ENCODE measurements at regions of chr1 and their contacts with region 1.

Region 1: DNA sequence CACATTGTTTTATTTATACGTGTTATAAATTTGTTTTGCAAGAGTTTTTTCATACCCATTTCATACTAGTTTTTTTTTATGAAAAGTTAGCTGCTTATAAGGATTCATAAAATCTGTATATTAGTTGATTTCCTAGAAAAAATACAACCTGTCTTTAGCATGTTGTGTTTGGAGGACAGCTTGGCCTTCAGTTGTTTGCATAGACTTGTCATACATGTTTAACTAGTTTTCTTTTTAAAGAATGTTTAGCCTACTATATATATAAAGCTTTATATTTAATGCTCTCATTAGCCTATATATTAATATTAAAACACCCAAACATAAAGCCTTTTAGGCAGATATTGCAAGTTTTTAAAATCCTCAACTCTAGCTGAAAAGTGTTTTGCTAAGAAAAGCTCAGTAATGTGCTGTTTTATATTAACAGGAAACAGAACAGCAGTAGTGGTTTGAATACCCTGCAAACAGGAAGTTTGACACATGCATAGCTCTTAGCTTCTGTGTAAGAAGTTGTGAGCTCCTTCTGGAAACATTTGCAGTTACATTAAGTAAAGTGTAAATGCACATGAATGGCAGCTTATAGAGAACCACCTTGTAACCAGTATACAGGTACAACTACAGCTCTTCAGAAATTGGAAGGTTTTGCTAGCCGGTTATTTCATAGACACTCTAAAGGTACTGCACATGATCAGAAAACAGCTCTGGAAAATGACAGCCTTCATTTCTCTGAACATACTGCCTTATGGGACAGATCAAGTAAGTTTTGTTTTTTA is at the start of gene PRKACB:
- DNase-seq: peak; percentile 65
- ATAC-seq: peak; percentile 86
- H3K4me3 ChIP-seq: peak within 1 kb of the TSS; percentile 46 to 85 (median 63)
- H3K4me3 Mint-ChIP-seq: peak within 1 kb of the TSS; percentile 91
- H3K27ac ChIP-seq: peak within 1 kb of the TSS; percentile 74 to 92
- H3K27ac Mint-ChIP-seq: peak within 1 kb of the TSS; percentile 95
- H3K4me1 ChIP-seq: peaks cover 2 to 38% of the 10 kb centered on the region in 2 donors
- H3K4me1 Mint-ChIP-seq: peaks cover 42% of the 10 kb centered on the region
- H3K27me3 ChIP-seq: no peaks in the 10 kb centered on the region
- H3K27me3 Mint-ChIP-seq: no peaks in the 10 kb centered on the region
- CTCF ChIP-seq: no peak
- total RNA-seq, gene PRKACB: 53.9 and 54.9 TPM in 2 replicates

Region 2: GRCh38 chr1:83996621-83997020 is 147.4 kb before region 1 on chr1:
- CTCF ChIA-PET with region 1: no interaction called
- POLR2A ChIA-PET with region 1: no interaction called
- intact Hi-C with region 1: no loop called
- DNase-seq: no peak
- ATAC-seq: no peak
- H3K4me3 ChIP-seq: no peak overlapping the region
- H3K4me3 Mint-ChIP-seq: no peak overlapping the region
- H3K27ac ChIP-seq: no peak overlapping the region
- H3K27ac Mint-ChIP-seq: no peak overlapping the region
- H3K4me1 ChIP-seq: peaks cover 10 to 15% of the 10 kb centered on the region in 2 donors
- H3K4me1 Mint-ChIP-seq: peaks cover 14% of the 10 kb centered on the region
- H3K27me3 ChIP-seq: peaks cover 0 to 51% (median 33%) of the 10 kb centered on the region in 4 experiments
- H3K27me3 Mint-ChIP-seq: peaks cover 57% of the 10 kb centered on the region
- CTCF ChIP-seq: no peak

Region 3: DNA sequence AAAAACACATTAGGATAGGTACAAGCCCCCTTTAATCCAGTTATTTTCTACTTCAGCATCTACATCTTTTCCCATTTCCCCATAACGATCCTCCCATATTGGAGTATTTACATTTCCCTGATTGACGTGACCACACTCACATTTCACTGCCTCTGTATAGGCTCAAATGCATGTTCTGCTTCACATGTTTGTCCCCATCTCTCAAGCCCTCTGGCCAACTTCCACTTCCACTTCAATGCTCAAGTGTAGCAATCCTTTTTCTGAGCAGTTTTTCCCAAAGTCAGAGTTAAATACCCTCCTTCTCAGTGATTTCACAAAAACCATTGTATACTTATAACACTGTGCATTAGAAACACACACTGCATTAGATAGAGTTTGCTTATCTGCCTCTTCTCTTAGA is 83.2 kb before region 1 on chr1:
- CTCF ChIA-PET with region 1: no interaction called
- POLR2A ChIA-PET with region 1: no interaction called
- intact Hi-C with region 1: no loop called
- DNase-seq: no peak
- ATAC-seq: no peak
- H3K4me3 ChIP-seq: no peak overlapping the region
- H3K4me3 Mint-ChIP-seq: no peak overlapping the region
- H3K27ac ChIP-seq: no peak overlapping the region
- H3K27ac Mint-ChIP-seq: no peak overlapping the region
- H3K4me1 ChIP-seq: no peaks in the 10 kb centered on the region
- H3K4me1 Mint-ChIP-seq: no peaks in the 10 kb centered on the region
- H3K27me3 ChIP-seq: peaks cover 0 to 5% (median 1%) of the 10 kb centered on the region in 4 experiments
- H3K27me3 Mint-ChIP-seq: peaks cover 15% of the 10 kb centered on the region
- CTCF ChIP-seq: no peak

Region 4: DNA sequence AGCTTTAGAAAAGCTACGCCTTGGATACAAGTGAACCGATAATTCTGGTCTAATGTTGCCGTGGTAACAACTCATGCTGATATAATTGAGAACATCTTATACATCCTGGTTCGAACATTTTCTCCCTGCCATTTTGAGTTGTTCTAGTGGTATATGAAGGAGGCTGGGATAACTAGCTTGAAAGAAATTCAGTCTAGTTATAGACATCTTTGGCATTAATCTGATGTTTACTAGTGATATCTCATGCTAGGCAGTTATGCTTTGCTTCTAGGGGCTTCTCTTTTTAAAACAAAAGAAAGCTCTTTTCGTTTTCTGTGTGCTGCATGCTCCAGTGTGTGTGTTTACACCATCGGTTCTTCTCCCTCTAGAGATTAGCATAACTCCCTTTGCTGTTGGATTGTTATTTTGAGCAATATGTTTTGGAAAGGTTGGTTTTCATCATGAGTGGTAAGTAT is 20.6 kb after region 1 on chr1:
- CTCF ChIA-PET with region 1: interaction called, 12 read pairs
- POLR2A ChIA-PET with region 1: interaction called, 4 read pairs
- intact Hi-C with region 1: loop called (anchors 2 kb)
- DNase-seq: no peak
- ATAC-seq: no peak
- H3K4me3 ChIP-seq: no peak overlapping the region
- H3K4me3 Mint-ChIP-seq: peak overlapping the region; percentile 50
- H3K27ac ChIP-seq: no peak overlapping the region
- H3K27ac Mint-ChIP-seq: no peak overlapping the region
- H3K4me1 ChIP-seq: peaks cover 15 to 47% of the 10 kb centered on the region in 2 donors
- H3K4me1 Mint-ChIP-seq: peaks cover 67% of the 10 kb centered on the region
- H3K27me3 ChIP-seq: no peaks in the 10 kb centered on the region
- H3K27me3 Mint-ChIP-seq: no peaks in the 10 kb centered on the region
- CTCF ChIP-seq: no peak

Region 5: DNA sequence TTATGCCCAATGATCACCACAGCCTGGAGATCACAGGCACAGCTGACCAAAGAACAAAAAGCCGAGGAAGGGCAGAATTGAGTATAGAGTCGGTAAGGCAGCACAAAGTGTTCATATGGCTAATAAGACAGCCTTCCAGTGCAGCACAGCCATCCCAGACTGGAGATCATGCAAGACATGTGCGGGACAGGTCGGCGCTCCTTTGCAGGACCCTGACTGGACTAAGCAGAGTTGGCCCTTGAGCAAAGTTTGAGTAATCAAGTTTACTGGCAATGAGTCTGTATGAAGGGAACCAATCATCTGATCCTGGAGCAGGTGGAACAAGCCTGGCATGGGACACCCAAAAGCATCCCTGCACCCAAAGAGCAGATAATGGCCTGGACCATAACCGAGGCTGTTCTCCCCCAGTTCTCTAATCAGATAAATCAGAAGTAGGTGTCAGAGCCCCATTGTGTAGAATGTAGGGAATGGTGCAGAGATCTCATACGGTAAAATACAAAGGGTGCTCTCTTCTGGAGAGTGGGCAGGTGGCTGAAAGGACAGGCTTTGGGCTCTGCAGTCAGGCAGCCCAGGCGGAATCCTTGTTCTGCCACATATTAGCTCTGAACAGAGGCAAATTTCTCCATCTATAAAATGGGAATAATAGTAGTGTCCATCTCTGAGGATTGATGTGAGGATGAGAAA is 243.6 kb after region 1 on chr1:
- CTCF ChIA-PET with region 1: interaction called, 10 read pairs
- POLR2A ChIA-PET with region 1: no interaction called
- intact Hi-C with region 1: no loop called
- DNase-seq: peak; percentile 18
- ATAC-seq: no peak
- H3K4me3 ChIP-seq: no peak overlapping the region
- H3K4me3 Mint-ChIP-seq: no peak overlapping the region
- H3K27ac ChIP-seq: no peak overlapping the region
- H3K27ac Mint-ChIP-seq: no peak overlapping the region
- H3K4me1 ChIP-seq: no peaks in the 10 kb centered on the region
- H3K4me1 Mint-ChIP-seq: peaks cover 2% of the 10 kb centered on the region
- H3K27me3 ChIP-seq: no peaks in the 10 kb centered on the region
- H3K27me3 Mint-ChIP-seq: no peaks in the 10 kb centered on the region
- CTCF ChIP-seq: no peak

Region 6: GRCh38 chr1:84573967-84574842 is 430.2 kb after region 1 on chr1 and contains the start of gene CTBS:
- CTCF ChIA-PET with region 1: interaction called, 12 read pairs
- POLR2A ChIA-PET with region 1: interaction called, 5 read pairs
- intact Hi-C with region 1: loop called (anchors 5 kb)
- DNase-seq: peak; percentile 93
- ATAC-seq: peak; percentile 95
- H3K4me3 ChIP-seq: peak within 1 kb of the TSS; percentile 59 to 94 (median 73)
- H3K4me3 Mint-ChIP-seq: peak within 1 kb of the TSS; percentile 100
- H3K27ac ChIP-seq: peak within 1 kb of the TSS; percentile 96 to 99
- H3K27ac Mint-ChIP-seq: peak within 1 kb of the TSS; percentile 100
- H3K4me1 ChIP-seq: peaks cover 26% of the 10 kb centered on the region in 2 donors
- H3K4me1 Mint-ChIP-seq: peaks cover 43% of the 10 kb centered on the region
- H3K27me3 ChIP-seq: no peaks in the 10 kb centered on the region
- H3K27me3 Mint-ChIP-seq: no peaks in the 10 kb centered on the region
- CTCF ChIP-seq: no peak
- total RNA-seq, gene CTBS: 19.1 and 19.9 TPM in 2 replicates

Region 7: GRCh38 chr1:84724128-84724860 is 580.3 kb after region 1 on chr1:
- CTCF ChIA-PET with region 1: interaction called, 14 read pairs
- POLR2A ChIA-PET with region 1: no interaction called
- intact Hi-C with region 1: no loop called
- DNase-seq: peak; percentile 52
- ATAC-seq: peak; percentile 24
- H3K4me3 ChIP-seq: no peak overlapping the region
- H3K4me3 Mint-ChIP-seq: no peak overlapping the region
- H3K27ac ChIP-seq: no peak overlapping the region
- H3K27ac Mint-ChIP-seq: no peak overlapping the region
- H3K4me1 ChIP-seq: no peaks in the 10 kb centered on the region
- H3K4me1 Mint-ChIP-seq: no peaks in the 10 kb centered on the region
- H3K27me3 ChIP-seq: peaks cover 0 to 4% (median 0%) of the 10 kb centered on the region in 4 experiments
- H3K27me3 Mint-ChIP-seq: peaks cover 9% of the 10 kb centered on the region
- CTCF ChIP-seq: peak; percentile 70

Region 8: DNA sequence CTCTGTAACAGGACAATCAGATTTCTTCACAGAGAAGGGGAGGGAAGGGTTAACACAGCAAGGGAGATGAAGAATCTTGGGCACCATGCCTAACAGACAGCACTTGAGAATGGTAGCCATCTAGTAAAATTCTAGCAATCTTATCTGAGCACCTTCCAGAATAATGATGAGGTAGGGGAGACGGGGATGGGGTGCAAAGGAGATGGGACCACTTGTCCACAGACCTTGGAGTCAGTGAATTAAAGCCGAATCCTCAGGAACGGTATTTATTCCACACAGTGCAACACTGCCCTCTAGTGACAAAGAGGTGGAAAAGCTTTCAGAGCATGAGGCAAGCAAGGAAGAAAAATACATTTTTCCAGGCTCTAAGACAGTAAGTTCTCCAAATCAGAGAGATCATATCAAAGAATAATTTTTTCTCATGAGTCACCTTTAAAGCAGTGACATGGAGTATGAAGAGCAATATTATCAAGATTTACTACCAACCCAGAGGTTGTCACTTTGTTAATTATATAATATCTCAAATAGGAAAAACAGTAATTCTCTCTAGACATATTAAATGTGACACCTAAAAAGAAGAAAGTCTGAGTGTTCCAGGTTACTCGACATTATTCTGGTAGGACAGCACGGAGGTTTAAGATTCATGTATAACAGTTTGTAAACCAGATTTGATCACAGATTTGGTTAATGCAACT is 792.3 kb after region 1 on chr1:
- CTCF ChIA-PET with region 1: interaction called, 8 read pairs
- POLR2A ChIA-PET with region 1: no interaction called
- intact Hi-C with region 1: loop called (anchors 5 kb)
- DNase-seq: peak; percentile 68
- ATAC-seq: peak; percentile 62
- H3K4me3 ChIP-seq: no peak overlapping the region
- H3K4me3 Mint-ChIP-seq: no peak overlapping the region
- H3K27ac ChIP-seq: no peak overlapping the region
- H3K27ac Mint-ChIP-seq: no peak overlapping the region
- H3K4me1 ChIP-seq: peaks cover 0 to 3% of the 10 kb centered on the region in 2 donors
- H3K4me1 Mint-ChIP-seq: peaks cover 2% of the 10 kb centered on the region
- H3K27me3 ChIP-seq: no peaks in the 10 kb centered on the region
- H3K27me3 Mint-ChIP-seq: no peaks in the 10 kb centered on the region
- CTCF ChIP-seq: peak; percentile 98